Posterior vena cava (tissue), 2 donors: ENCODE measurements at regions of chr16 and their contacts with region 1.

Region 1: GRCh38 chr16:81737885-81738786 is 41.0 kb upstream of the PLCG2 start:
- DNase-seq: peak; percentile 90

Region 2: GRCh38 chr16:81204798-81205680 is 533.1 kb before region 1 on chr16:
- intact Hi-C with region 1: loop called in 1 of 2 experiments (anchors 10 kb)
- DNase-seq: no peak